ENCODE measurements at regions of chr3 and their contacts with region 1.

Region 1: DNA sequence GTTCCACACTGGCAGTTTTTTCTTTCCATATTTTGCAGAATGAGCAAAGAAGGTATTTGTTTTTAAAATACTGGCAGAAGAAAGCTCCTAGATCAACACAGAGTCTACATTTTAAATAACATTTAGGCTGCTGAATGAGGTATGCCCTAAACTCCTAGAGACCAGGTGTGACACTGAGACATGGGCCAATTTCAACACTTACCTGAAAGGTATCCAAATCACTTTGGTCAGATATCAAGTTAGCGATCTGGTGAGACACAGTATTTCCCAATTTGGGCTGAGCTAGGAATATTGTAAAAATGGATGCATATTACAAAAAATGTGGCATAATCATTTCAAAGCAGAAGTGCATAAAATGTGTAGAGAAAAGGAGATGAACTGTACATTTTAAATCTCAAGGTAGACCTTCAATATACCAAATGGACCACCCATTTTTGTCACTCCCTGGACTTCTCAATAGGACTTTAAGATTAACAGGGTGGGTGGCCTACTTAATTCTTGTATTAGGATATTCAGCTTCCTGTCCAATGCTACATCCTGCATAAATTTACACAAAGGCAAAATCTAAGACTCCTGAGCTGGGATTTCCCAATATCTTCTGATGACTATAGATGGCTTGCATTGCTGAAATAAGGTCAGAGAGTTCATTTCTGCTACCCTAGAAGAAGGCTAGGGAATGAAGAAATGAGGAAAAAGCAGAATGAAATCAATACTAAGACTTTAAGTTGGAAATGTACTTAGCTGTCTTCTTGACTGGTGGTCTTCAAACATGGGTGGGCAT is 487.8 kb downstream of the FOXP1 start:
- DNase-seq: no peak
- H3K27ac ChIP-seq: no peak overlapping the region
- CTCF ChIP-seq: no peak

Region 2: GRCh38 chr3:70856414-70857162 is 239.1 kb before region 1 on chr3:
- CTCF ChIA-PET with region 1: interaction called, 11 read pairs
- POLR2A ChIA-PET with region 1: no interaction called
- DNase-seq: peak; percentile 44
- H3K27ac ChIP-seq: no peak overlapping the region
- CTCF ChIP-seq: no peak

Region 3: DNA sequence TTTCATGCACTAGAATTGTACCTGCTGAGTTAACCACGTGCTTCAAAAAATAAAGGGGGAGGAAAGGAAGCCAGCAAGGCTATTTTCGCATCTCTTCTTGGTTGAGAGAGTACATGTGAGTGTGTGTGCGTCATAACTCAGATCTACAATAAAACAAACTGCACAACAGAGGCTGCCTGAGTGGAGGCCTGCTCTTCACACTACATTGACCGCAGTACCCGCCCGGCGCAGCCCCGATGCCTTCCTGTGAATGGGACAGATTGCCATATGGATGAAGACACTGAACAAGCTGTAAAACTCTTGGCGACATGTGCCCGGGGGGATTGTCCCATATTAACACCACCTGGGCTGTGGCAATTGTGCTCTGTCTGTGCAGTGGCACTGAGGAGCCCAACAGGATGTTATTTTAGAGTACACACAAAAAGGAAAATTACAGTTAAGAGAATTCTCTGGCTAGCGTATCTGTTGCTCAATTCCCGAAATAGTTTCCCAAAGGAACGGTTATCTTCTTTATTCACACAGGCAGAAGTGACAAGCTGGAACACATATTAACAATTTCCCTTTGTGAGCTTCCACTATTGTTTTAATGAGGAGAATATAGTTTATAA is 63.7 kb before region 1 on chr3:
- CTCF ChIA-PET with region 1: no interaction called
- POLR2A ChIA-PET with region 1: no interaction called
- DNase-seq: no peak
- H3K27ac ChIP-seq: no peak overlapping the region
- CTCF ChIP-seq: no peak

Region 4: GRCh38 chr3:71168880-71169411 is 73.2 kb after region 1 on chr3:
- CTCF ChIA-PET with region 1: no interaction called
- POLR2A ChIA-PET with region 1: no interaction called
- DNase-seq: no peak
- H3K27ac ChIP-seq: no peak overlapping the region
- CTCF ChIP-seq: no peak

Measured in RWPE1 (cell line).